ENCODE measurements at regions of chr11 and their contacts with region 1.

Region 1: GRCh38 chr11:119373921-119374631 is 7.4 kb downstream of the USP2 start:
- DNase-seq: peak; percentile 52 to 72
- ATAC-seq: peak; percentile 67 to 87
- H3K4me3 ChIP-seq: no peak overlapping the region
- H3K27ac ChIP-seq: no peak overlapping the region
- H3K4me1 ChIP-seq: peaks cover 19% of the 10 kb centered on the region
- CTCF ChIP-seq: peak; percentile 73
- EP300 ChIP-seq: no peak
- POLR2A ChIP-seq: no peak
- RAD21 ChIP-seq: peak; percentile 80 to 88

Region 2: DNA sequence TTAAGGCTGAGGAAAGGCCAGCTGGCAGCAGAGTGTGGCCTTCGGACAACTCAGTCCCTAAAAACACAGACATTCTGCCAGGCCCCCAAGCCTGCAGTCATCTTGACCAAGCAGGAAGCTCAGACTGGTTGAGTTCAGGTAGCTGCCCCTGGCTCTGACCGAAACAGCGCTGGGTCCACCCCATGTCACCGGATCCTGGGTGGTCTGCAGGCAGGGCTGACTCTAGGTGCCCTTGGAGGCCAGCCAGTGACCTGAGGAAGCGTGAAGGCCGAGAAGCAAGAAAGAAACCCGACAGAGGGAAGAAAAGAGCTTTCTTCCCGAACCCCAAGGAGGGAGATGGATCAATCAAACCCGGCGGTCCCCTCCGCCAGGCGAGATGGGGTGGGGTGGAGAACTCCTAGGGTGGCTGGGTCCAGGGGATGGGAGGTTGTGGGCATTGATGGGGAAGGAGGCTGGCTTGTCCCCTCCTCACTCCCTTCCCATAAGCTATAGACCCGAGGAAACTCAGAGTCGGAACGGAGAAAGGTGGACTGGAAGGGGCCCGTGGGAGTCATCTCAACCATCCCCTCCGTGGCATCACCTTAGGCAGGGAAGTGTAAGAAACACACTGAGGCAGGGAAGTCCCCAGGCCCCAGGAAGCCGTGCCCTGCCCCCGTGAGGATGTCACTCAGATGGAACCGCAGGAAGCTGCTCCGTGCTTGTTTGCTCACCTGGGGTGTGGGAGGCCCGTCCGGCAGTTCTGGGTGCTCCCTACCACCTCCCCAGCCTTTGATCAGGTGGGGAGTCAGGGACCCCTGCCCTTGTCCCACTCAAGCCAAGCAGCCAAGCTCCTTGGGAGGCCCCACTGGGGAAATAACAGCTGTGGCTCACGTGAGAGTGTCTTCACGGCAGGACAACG is 478.7 kb before region 1 on chr11:
- CTCF ChIA-PET with region 1: no interaction called
- POLR2A ChIA-PET with region 1: no interaction called
- DNase-seq: no peak
- ATAC-seq: peak in 1 of 2 experiments; percentile 7; a peak in 2 of 6 replicates
- H3K4me3 ChIP-seq: no peak overlapping the region
- H3K27ac ChIP-seq: peak overlapping the region in 1 of 2 experiments; percentile 40; a peak in 2 of 6 replicates
- H3K4me1 ChIP-seq: peaks cover 33% of the 10 kb centered on the region; the same call in 2 of the 3 replicates
- CTCF ChIP-seq: no peak
- EP300 ChIP-seq: no peak
- POLR2A ChIP-seq: no peak
- RAD21 ChIP-seq: no peak

Region 3: GRCh38 chr11:119334174-119334930 is 39.7 kb before region 1 on chr11 and contains the start of gene RNF26:
- CTCF ChIA-PET with region 1: interaction called, 123 read pairs
- POLR2A ChIA-PET with region 1: interaction called, 3 read pairs
- DNase-seq: peak; percentile 96 to 97
- ATAC-seq: peak; percentile 81 to 89
- H3K4me3 ChIP-seq: peak within 1 kb of the TSS; percentile 72
- H3K27ac ChIP-seq: peak within 1 kb of the TSS; percentile 79 to 94
- H3K4me1 ChIP-seq: peaks cover 19% of the 10 kb centered on the region
- CTCF ChIP-seq: no peak
- EP300 ChIP-seq: no peak
- POLR2A ChIP-seq: peak; percentile 53
- RAD21 ChIP-seq: no peak
- polyA plus RNA-seq, gene RNF26: 23.5 and 28.4 TPM in 2 replicates

Region 4: GRCh38 chr11:119347242-119347641 is 26.8 kb before region 1 on chr11:
- CTCF ChIA-PET with region 1: interaction called, 33 read pairs
- POLR2A ChIA-PET with region 1: no interaction called
- DNase-seq: no peak
- ATAC-seq: no peak; a peak in 2 of 6 replicates
- H3K4me3 ChIP-seq: no peak overlapping the region
- H3K27ac ChIP-seq: no peak overlapping the region
- H3K4me1 ChIP-seq: no peaks in the 10 kb centered on the region
- CTCF ChIP-seq: no peak
- EP300 ChIP-seq: no peak
- POLR2A ChIP-seq: no peak
- RAD21 ChIP-seq: no peak

Region 5: DNA sequence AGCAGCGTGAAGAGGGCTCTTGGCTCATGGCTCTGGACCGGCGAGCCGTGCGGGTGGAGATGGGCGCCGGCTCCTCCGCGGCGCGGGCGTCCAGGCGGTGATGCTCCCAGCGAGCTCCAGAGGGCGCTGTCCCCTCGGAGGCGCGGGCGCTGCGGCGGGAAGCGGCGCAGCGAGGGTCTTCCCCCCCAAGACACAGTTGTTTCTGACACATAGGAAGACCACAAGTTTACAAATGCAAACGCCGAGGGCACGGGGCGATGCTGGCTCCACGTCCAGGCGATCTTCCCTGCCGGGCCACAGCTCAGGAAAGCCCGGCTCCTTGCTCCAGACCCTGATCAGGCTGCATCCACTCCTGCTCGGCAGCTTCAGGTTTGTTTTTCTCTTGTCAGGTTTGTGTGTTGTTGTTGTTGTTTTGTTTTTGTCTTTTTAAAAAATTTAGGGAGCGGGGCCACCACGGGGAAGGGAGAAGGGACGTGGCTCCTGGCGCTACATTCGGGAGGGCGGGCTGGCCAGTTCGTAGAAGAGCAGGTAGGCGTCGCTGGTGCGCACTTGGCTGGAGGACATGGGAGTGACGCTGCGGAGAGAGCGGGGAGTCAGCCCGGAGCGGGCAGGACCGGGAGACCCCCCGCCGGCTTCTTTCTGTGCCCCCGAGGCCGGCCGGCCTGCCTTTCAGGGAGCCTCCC is 17.6 kb before region 1 on chr11:
- CTCF ChIA-PET with region 1: interaction called, 341 read pairs
- POLR2A ChIA-PET with region 1: interaction called, 5 read pairs
- DNase-seq: peak; percentile 70 to 90
- ATAC-seq: peak; percentile 82 to 89
- H3K4me3 ChIP-seq: peak overlapping the region; percentile 57
- H3K27ac ChIP-seq: peak overlapping the region; percentile 78 to 87
- H3K4me1 ChIP-seq: peaks cover 30% of the 10 kb centered on the region
- CTCF ChIP-seq: peak; percentile 90
- EP300 ChIP-seq: no peak
- POLR2A ChIP-seq: no peak
- RAD21 ChIP-seq: peak; percentile 60 to 79

Region 6: DNA sequence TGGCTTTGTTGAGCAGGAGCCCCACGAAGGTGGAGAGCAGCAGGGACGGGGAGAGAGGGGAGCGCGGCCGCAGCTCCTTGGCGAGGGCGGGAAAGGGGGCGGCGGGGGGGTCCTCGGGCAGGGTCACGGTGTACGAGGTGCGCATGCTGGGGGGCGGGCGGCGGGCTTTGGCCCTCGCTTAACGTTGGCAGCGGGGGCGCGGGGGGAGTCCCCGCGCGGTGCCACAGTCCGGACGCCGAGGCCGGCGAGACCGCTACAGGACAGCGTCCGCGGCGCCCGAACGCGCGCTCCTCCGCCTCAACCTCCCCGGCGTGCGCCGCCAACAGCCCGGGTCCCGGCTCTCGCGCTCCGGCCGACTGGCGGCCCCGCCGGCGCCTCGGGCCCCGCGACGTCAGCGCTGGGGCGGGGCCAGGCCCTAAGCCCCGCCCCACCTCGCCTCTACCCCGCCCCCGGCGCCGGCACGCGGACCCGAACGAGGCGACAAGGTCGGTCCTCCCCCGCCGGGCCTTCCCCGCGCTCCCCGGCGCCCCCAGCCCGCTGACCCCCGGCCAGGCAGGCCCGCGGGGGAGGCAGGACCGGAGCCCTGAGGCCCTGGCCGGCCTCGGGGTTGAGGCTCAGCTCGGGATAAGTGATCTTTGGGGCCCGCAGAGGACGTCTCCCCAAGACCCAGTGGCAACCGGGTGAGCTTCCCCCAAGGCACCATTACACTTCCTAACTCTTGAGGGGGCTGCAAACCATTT is 10.1 kb before region 1 on chr11:
- CTCF ChIA-PET with region 1: interaction called, 341 read pairs
- POLR2A ChIA-PET with region 1: interaction called, 5 read pairs
- DNase-seq: peak in 1 of 2 experiments; percentile 31
- ATAC-seq: peak in 1 of 2 experiments; percentile 49; a peak in 3 of 6 replicates
- H3K4me3 ChIP-seq: peak overlapping the region; percentile 50
- H3K27ac ChIP-seq: peak overlapping the region; percentile 74 to 91
- H3K4me1 ChIP-seq: peaks cover 73% of the 10 kb centered on the region
- CTCF ChIP-seq: no peak
- EP300 ChIP-seq: no peak
- POLR2A ChIP-seq: no peak
- RAD21 ChIP-seq: no peak

Region 7: GRCh38 chr11:119422809-119423508 is 48.9 kb after region 1 on chr11 and contains the start of gene THY1:
- CTCF ChIA-PET with region 1: no interaction called
- POLR2A ChIA-PET with region 1: no interaction called
- DNase-seq: no peak
- ATAC-seq: peak; percentile 30 to 70; a peak in 4 of 6 replicates
- H3K4me3 ChIP-seq: peak within 1 kb of the TSS; percentile 58
- H3K27ac ChIP-seq: peak within 1 kb of the TSS; percentile 63 to 81; a peak in 5 of 6 replicates
- H3K4me1 ChIP-seq: peaks cover 6% of the 10 kb centered on the region; the same call in 1 of the 3 replicates
- CTCF ChIP-seq: no peak
- EP300 ChIP-seq: no peak
- POLR2A ChIP-seq: no peak
- RAD21 ChIP-seq: no peak
- polyA plus RNA-seq, gene THY1: 7.1 and 8.5 TPM in 2 replicates

Measured in A549 (cell line).